Activated B cell treated with CpG ODN at 0.5 μM for 24 hours (primary cell): ENCODE measurements at regions of chr16 and their contacts with region 1.

Region 1: GRCh38 chr16:74309789-74310781 is 13.5 kb downstream of the PSMD7 start:
- DNase-seq: no peak
- ATAC-seq: no peak
- H3K4me3 Mint-ChIP-seq: no peak overlapping the region
- H3K27ac Mint-ChIP-seq: no peak overlapping the region
- H3K4me1 Mint-ChIP-seq: no peaks in the 10 kb centered on the region
- H3K27me3 Mint-ChIP-seq: no peaks in the 10 kb centered on the region
- CTCF ChIP-seq: peak; percentile 34

Region 2: DNA sequence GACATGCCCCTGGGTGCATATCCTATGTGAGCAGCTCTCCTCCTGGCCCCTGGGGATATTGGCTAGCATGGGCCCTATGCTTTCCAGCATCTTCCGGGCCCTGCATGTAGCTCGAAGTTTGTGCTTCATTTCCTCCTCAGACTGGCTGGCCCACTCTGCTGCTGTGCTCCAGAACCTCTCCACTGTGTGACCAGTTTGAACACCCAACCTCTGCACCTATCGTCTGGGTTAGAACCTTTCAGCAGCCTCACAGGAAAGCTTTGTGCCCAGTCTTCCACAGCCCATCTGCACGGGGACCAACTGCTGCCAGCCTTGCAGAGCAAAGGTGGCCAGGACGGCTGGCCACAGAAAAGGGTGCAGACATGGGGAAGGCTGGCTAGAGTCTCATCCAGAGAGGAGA is 121.4 kb after region 1 on chr16:
- CTCF ChIA-PET with region 1: interaction called, 8 read pairs
- POLR2A ChIA-PET with region 1: no interaction called
- intact Hi-C with region 1: loop called (anchors 2 kb)
- DNase-seq: no peak
- ATAC-seq: no peak
- H3K4me3 Mint-ChIP-seq: no peak overlapping the region
- H3K27ac Mint-ChIP-seq: no peak overlapping the region
- H3K4me1 Mint-ChIP-seq: no peaks in the 10 kb centered on the region
- H3K27me3 Mint-ChIP-seq: no peaks in the 10 kb centered on the region
- CTCF ChIP-seq: no peak